ENCODE measurements at regions of chr15 and their contacts with region 1.

Region 1: GRCh38 chr15:49235446-49236124 is 65.5 kb downstream of the GALK2 start:
- DNase-seq: peak; percentile 87 to 95 (median 94)
- H3K4me3 ChIP-seq: peak overlapping the region in 2 of 7 experiments; percentile 18 to 43
- H3K27ac ChIP-seq: peak overlapping the region in 1 of 2 experiments; percentile 50
- H3K4me1 ChIP-seq: peaks cover 0 to 23% (median 7%) of the 10 kb centered on the region in 4 experiments
- H3K27me3 ChIP-seq: no peaks in the 10 kb centered on the region

Region 2: GRCh38 chr15:49168016-49168415 is 67.6 kb before region 1 on chr15:
- CTCF ChIA-PET with region 1: no interaction called
- POLR2A ChIA-PET with region 1: no interaction called
- DNase-seq: no peak
- H3K4me3 ChIP-seq: no peak overlapping the region
- H3K27ac ChIP-seq: no peak overlapping the region
- H3K4me1 ChIP-seq: peaks cover 6 to 28% (median 20%) of the 10 kb centered on the region in 4 experiments
- H3K27me3 ChIP-seq: no peaks in the 10 kb centered on the region

Region 3: GRCh38 chr15:49421991-49422390 is 186.4 kb after region 1 on chr15:
- CTCF ChIA-PET with region 1: interaction called, 26 read pairs
- POLR2A ChIA-PET with region 1: no interaction called
- DNase-seq: peak; percentile 58 to 80 (median 63)
- H3K4me3 ChIP-seq: peak overlapping the region in 3 of 7 experiments; percentile 27 to 71 (median 29)
- H3K27ac ChIP-seq: no peak overlapping the region
- H3K4me1 ChIP-seq: peaks cover 0 to 11% (median 0%) of the 10 kb centered on the region in 4 experiments
- H3K27me3 ChIP-seq: no peaks in the 10 kb centered on the region

Measured in common myeloid progenitor, CD34-positive (primary cell).